ENCODE measurements at regions of chr14 and their contacts with region 1.

Region 1: GRCh38 chr14:60430276-60430675 is 55.6 kb downstream of the C14orf39 start:
- DNase-seq: no peak
- ATAC-seq: no peak
- H3K4me3 ChIP-seq: no peak overlapping the region
- H3K27ac ChIP-seq: no peak overlapping the region
- H3K4me1 ChIP-seq: no peaks in the 10 kb centered on the region
- H3K27me3 ChIP-seq: no peaks in the 10 kb centered on the region
- CTCF ChIP-seq: no peak

Region 2: DNA sequence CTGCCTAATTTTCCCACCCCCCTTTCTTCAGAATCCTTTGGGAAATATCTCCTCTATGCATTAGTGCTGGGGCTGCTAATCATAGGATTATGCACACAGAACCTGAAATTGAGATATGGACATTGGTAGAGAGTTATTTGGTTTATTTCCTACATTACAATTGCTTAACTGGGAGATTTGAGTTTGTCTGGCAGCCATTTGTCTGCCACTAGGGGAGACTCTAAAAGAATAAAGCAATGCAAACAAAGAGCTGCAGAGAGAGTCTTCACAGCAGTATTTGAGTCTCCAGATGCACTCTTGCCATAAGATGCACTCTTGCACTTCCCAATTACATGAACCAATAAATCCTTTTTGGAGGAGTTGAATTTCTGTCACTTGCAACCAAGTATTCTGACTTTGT is 350.6 kb before region 1 on chr14:
- CTCF ChIA-PET with region 1: no interaction called
- POLR2A ChIA-PET with region 1: no interaction called
- in situ Hi-C with region 1: no loop called
- intact Hi-C with region 1: no loop called
- DNase-seq: no peak
- ATAC-seq: no peak
- H3K4me3 ChIP-seq: no peak overlapping the region
- H3K27ac ChIP-seq: no peak overlapping the region
- H3K4me1 ChIP-seq: no peaks in the 10 kb centered on the region
- H3K27me3 ChIP-seq: no peaks in the 10 kb centered on the region
- CTCF ChIP-seq: no peak

Region 3: DNA sequence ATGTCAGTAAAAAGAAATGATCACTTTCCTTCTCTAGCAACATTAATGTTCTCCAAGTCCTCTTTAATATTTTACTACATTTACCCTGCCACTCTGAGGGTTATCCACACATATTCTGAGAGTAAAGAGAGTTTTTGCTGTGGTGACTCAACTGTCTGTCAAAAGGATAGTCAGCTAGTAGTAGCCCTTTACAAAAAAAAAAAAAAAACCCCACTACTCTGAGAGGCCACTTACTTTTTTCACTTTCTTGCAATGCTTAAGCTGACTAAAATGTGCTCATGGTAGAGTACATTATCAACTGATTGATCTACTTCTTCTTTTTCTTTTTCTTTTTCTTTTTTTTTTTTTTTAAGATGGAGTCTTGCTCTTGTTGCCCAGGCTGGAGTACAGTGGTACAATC is 208.8 kb before region 1 on chr14:
- CTCF ChIA-PET with region 1: no interaction called
- POLR2A ChIA-PET with region 1: interaction called, 10 read pairs
- in situ Hi-C with region 1: no loop called
- intact Hi-C with region 1: no loop called
- DNase-seq: no peak
- ATAC-seq: no peak
- H3K4me3 ChIP-seq: no peak overlapping the region
- H3K27ac ChIP-seq: no peak overlapping the region
- H3K4me1 ChIP-seq: no peaks in the 10 kb centered on the region
- H3K27me3 ChIP-seq: no peaks in the 10 kb centered on the region
- CTCF ChIP-seq: no peak

Region 4: DNA sequence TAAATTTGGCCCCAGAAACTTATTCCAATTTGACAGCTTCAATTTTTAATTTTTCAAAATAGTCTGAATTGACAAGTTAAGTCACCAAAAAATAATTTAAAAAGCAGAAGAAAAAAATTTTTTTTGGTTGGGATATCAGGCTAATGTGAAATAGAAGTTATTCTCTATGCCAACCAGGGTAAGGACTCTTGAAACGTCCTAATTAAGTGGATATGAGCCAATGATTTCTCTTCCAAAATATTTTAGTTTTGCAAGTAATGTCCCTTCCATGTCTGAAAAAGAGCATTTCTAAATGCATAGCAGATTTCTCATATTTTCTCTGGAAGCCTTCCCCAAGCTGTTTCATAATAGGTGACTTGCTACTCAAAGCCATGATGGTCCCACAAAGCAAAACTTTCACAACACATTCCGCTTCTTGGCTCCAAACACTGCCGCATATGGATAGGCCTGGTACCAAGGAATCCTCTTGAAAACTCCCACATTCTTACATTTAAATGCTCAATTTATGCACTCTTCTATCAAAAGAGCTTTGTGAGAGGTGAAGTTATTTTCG is 143.7 kb after region 1 on chr14:
- CTCF ChIA-PET with region 1: no interaction called
- POLR2A ChIA-PET with region 1: interaction called, 13 read pairs
- in situ Hi-C with region 1: no loop called
- intact Hi-C with region 1: no loop called
- DNase-seq: no peak
- ATAC-seq: no peak
- H3K4me3 ChIP-seq: no peak overlapping the region
- H3K27ac ChIP-seq: no peak overlapping the region
- H3K4me1 ChIP-seq: no peaks in the 10 kb centered on the region
- H3K27me3 ChIP-seq: no peaks in the 10 kb centered on the region
- CTCF ChIP-seq: no peak